Ovary (tissue), 10 donors: ENCODE measurements at regions of chr18 and their contacts with region 1.

Region 1: GRCh38 chr18:62982600-62983251 is 267.4 kb downstream of the PHLPP1 start:
- DNase-seq: peak; percentile 61 to 74 (median 66)
- H3K4me3 ChIP-seq: peak overlapping the region; percentile 4
- H3K27ac ChIP-seq: no peak overlapping the region
- H3K4me1 ChIP-seq: no peaks in the 10 kb centered on the region
- H3K27me3 ChIP-seq: no peaks in the 10 kb centered on the region
- CTCF ChIP-seq: peak; percentile 69 to 86 (median 71)
- EP300 ChIP-seq: no peak
- POLR2A ChIP-seq: no peak

Region 2: GRCh38 chr18:62186774-62187542 is 795.8 kb before region 1 on chr18 and contains the starts of genes PIGN and RELCH:
- intact Hi-C with region 1: loop called in 2 of 4 experiments (anchors 5 to 10 kb)
- DNase-seq: peak; percentile 92 to 96 (median 94)
- H3K4me3 ChIP-seq: peak within 1 kb of the TSS; percentile 70
- H3K27ac ChIP-seq: peak within 1 kb of the TSS in 1 of 2 donors; percentile 50
- H3K4me1 ChIP-seq: peaks cover 7% of the 10 kb centered on the region
- H3K27me3 ChIP-seq: no peaks in the 10 kb centered on the region
- CTCF ChIP-seq: no peak
- EP300 ChIP-seq: no peak
- POLR2A ChIP-seq: peak; percentile 19
- total RNA-seq, gene PIGN: 17.7 to 29.1 (median 26.1) TPM
- total RNA-seq, gene RELCH: 21.5 to 32.7 (median 27.8) TPM

Region 3: DNA sequence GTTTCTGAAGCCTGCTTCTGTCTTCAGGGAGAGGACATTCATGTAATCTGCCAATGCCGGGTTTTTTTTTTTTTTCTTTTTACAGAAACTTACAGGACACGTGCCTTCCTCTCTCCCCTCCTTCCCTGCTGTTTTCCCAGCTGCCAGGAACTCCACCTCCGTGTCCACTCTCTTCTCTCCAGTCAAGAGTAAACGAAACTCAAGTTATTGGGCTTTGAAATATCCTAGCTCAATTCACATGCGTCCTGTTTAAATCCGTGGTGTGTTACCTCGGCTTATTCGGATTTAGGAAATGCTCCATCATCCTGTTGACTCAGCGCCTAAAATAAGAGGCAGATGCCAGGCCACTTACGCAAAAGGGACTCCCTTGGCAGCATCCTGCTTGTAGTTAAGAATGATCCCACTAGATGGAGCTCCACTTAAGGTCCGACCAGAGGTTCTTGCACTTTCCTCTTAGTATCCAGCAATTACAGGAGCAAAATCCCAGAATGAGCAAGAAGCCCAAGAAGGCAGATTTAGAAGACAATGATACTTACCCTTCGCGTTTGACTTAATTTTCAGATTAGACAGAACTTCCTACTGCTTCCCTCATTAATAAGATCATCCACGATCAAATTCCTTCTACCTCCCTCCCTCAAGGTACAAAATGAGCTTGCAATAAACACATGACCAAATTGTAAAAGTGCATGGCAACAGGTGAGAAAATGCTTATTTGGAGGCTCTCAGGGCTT is 557.1 kb before region 1 on chr18:
- intact Hi-C with region 1: loop called in 1 of 4 experiments (anchors 5 kb)
- DNase-seq: peak; percentile 68 to 89 (median 74)
- H3K4me3 ChIP-seq: peak overlapping the region; percentile 18
- H3K27ac ChIP-seq: peak overlapping the region in 1 of 2 donors; percentile 59
- H3K4me1 ChIP-seq: peaks cover 2% of the 10 kb centered on the region
- H3K27me3 ChIP-seq: no peaks in the 10 kb centered on the region
- CTCF ChIP-seq: peak; percentile 72 to 78 (median 73)
- EP300 ChIP-seq: no peak
- POLR2A ChIP-seq: no peak

Region 4: DNA sequence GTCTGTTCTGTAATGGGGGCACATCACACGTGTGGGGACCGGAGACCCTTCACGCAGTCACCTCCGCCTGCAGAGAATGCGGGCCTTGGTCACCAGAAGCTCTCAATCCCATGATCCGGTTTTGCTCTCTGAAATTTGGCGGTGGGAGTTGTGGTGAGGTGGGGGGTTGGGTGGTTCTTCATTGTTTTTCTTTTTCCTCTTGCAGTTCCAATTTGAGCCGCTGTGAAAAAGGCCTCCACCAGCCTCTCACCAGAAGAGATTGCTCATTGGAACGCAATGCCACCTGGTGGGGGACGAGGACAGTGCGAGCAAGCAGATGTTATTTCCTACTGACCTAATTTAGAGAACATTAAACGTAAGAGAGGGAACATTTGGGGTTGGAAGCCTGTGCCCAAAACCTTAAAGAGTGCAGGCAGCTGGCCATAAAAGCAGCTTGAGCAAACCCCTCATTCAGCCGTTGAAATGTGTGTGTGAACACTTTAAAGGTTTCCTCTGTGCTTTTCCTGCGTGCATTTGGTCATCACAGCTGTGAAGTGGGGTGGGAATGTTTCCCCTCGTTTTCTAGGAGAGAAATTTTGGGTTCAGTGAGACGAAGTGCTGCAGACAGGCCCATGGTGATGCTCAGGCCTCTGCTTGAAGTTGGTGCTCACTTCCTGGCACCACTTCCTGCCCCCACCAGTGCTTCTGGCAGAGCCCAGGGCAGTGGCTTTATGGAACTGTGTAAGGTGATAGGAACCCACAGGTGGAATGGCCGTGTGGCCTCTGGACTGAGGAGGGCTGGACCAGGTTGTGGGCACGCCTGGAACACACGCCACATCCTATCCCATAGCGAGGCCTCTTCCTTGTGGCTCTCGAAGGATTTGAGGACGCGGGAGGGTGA is 398.2 kb before region 1 on chr18:
- intact Hi-C with region 1: loop called (anchors 5 to 10 kb)
- DNase-seq: peak; percentile 78 to 91 (median 88)
- H3K4me3 ChIP-seq: no peak overlapping the region
- H3K27ac ChIP-seq: no peak overlapping the region
- H3K4me1 ChIP-seq: no peaks in the 10 kb centered on the region
- H3K27me3 ChIP-seq: no peaks in the 10 kb centered on the region
- CTCF ChIP-seq: peak; percentile 93 to 98 (median 96)
- EP300 ChIP-seq: no peak
- POLR2A ChIP-seq: no peak

Region 5: DNA sequence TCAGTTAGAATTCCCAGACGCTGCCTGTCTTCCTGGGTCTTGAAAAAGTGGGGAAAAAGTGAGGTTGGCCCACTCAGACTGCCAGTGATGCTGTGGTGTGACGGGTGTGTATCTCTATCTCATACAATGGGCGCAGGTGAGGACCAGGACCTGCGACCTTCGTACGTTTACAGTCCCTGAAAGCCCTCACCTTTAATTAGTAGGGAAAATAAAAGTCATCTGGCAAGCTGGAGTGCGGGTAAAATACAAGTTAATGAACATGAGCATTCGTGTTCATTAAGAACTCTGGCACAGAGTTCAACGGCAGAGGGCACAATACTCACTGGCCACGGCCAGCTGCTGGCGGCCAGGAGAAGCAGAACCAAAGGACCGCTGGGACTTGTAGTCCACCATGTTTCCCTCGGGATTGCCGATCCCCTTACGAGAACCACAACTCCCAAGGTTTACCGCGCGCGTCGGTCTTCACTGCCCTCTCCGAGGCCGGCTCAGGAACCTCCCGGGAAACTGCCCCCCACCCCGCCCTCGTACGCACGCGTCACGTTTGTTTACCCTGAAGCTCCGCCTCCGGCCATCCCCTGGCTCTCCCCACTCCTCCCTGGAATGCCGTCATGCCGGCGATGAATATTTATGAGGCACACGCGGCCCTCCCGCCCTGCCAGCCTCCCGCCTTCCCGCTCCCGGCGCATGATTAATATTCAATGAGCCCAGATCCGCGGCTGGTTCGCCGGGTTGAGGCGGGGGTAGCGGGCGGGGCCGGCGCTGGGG is 267.9 kb before region 1 on chr18:
- intact Hi-C with region 1: loop called (anchors 2 to 5 kb)
- DNase-seq: peak; percentile 100
- H3K4me3 ChIP-seq: peak overlapping the region; percentile 59
- H3K27ac ChIP-seq: peak overlapping the region; percentile 91 to 99
- H3K4me1 ChIP-seq: peaks cover 1% of the 10 kb centered on the region
- H3K27me3 ChIP-seq: no peaks in the 10 kb centered on the region
- CTCF ChIP-seq: peak; percentile 72 to 86 (median 81)
- EP300 ChIP-seq: no peak
- POLR2A ChIP-seq: no peak

Region 6: GRCh38 chr18:63138436-63139340 is 156.0 kb after region 1 on chr18:
- intact Hi-C with region 1: no loop called
- DNase-seq: no peak
- H3K4me3 ChIP-seq: no peak overlapping the region
- H3K27ac ChIP-seq: no peak overlapping the region
- H3K4me1 ChIP-seq: peaks cover 9% of the 10 kb centered on the region
- H3K27me3 ChIP-seq: no peaks in the 10 kb centered on the region
- CTCF ChIP-seq: no peak
- EP300 ChIP-seq: no peak
- POLR2A ChIP-seq: no peak